CD8-positive, alpha-beta T cell (primary cell): ENCODE measurements at regions of chr9 and their contacts with region 1.

Region 1: DNA sequence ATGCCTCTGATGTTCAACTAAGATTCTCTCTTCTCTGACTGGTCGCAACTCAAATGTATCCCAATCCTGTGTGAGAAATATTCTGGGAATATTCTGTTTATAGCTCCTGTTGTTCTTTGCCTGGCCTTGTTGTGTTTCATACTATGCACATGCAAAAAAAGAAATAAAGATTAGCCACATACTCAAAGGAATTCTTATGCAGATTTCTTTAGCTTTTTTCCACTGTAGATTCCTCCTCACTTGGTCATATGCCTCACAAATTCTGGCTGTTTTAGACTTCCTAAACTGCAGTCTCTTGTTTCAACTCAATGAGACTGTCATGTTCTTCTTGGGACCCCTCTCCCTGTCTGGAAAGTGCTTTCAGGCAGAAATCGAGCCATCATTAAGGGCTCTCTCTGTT is 217.5 kb upstream of the SH3GL2 start:
- DNase-seq: no peak
- ATAC-seq: no peak
- H3K4me3 ChIP-seq: no peak overlapping the region
- H3K4me3 Mint-ChIP-seq: no peak overlapping the region
- H3K27ac ChIP-seq: no peak overlapping the region
- H3K27ac Mint-ChIP-seq: no peak overlapping the region
- H3K4me1 ChIP-seq: no peaks in the 10 kb centered on the region
- H3K4me1 Mint-ChIP-seq: no peaks in the 10 kb centered on the region
- H3K27me3 ChIP-seq: no peaks in the 10 kb centered on the region
- H3K27me3 Mint-ChIP-seq: no peaks in the 10 kb centered on the region
- CTCF ChIP-seq: no peak

Region 2: GRCh38 chr9:17414986-17415385 is 53.6 kb after region 1 on chr9:
- CTCF ChIA-PET with region 1: no interaction called
- POLR2A ChIA-PET with region 1: no interaction called
- intact Hi-C with region 1: loop called in 1 of 2 experiments (anchors 5 kb)
- DNase-seq: no peak
- ATAC-seq: no peak
- H3K4me3 ChIP-seq: no peak overlapping the region
- H3K4me3 Mint-ChIP-seq: no peak overlapping the region
- H3K27ac ChIP-seq: no peak overlapping the region
- H3K27ac Mint-ChIP-seq: no peak overlapping the region
- H3K4me1 ChIP-seq: no peaks in the 10 kb centered on the region
- H3K4me1 Mint-ChIP-seq: no peaks in the 10 kb centered on the region
- H3K27me3 ChIP-seq: no peaks in the 10 kb centered on the region
- H3K27me3 Mint-ChIP-seq: no peaks in the 10 kb centered on the region
- CTCF ChIP-seq: no peak